ENCODE measurements at regions of chr6 and their contacts with region 1.

Region 1: DNA sequence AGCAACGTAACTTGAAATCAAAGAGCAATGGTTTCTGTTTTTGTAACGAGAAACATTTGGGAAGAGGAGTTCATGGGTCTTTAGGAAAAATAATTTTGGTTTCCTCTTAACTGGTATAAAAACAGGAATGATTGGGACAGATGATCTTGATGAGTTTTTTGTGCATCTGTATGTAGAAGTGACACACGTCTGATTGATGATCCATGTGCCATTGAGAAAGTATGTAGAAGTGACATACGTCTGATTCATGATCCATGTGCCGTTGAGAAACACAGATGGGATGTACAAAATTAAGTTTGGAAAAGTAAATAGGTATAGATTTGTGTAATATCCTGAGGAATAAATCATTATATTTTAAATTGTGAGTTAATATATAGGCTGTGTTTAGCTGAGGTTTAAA is 2.1 kb downstream of the KIAA1586 start:
- DNase-seq: no peak
- H3K4me3 Mint-ChIP-seq: peak overlapping the region; percentile 81
- H3K27ac Mint-ChIP-seq: no peak overlapping the region
- H3K4me1 Mint-ChIP-seq: peaks cover 21% of the 10 kb centered on the region
- H3K27me3 Mint-ChIP-seq: peaks cover 22% of the 10 kb centered on the region

Region 2: DNA sequence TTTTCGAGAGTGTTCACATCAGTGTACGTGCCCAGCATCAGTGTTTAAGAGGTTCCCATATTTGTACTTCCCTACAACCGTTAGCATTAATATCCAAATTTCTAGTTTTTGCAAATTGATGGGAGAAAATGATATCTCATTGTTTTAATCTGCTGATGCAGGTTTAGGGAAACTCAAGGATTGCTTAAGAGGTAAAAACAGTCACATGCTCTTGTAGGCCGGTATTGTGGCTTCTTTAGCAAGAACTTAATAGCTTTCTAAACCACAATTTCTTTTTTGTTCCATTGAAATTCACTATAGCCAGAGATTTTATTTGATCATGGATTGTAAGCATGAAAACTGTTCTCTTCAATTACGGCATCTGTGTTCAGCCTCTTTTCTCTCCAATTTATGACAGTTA is 64.2 kb before region 1 on chr6:
- intact Hi-C with region 1: no loop called
- DNase-seq: no peak
- H3K4me3 Mint-ChIP-seq: no peak overlapping the region
- H3K27ac Mint-ChIP-seq: no peak overlapping the region
- H3K4me1 Mint-ChIP-seq: no peaks in the 10 kb centered on the region
- H3K27me3 Mint-ChIP-seq: peaks cover 15% of the 10 kb centered on the region

Region 3: DNA sequence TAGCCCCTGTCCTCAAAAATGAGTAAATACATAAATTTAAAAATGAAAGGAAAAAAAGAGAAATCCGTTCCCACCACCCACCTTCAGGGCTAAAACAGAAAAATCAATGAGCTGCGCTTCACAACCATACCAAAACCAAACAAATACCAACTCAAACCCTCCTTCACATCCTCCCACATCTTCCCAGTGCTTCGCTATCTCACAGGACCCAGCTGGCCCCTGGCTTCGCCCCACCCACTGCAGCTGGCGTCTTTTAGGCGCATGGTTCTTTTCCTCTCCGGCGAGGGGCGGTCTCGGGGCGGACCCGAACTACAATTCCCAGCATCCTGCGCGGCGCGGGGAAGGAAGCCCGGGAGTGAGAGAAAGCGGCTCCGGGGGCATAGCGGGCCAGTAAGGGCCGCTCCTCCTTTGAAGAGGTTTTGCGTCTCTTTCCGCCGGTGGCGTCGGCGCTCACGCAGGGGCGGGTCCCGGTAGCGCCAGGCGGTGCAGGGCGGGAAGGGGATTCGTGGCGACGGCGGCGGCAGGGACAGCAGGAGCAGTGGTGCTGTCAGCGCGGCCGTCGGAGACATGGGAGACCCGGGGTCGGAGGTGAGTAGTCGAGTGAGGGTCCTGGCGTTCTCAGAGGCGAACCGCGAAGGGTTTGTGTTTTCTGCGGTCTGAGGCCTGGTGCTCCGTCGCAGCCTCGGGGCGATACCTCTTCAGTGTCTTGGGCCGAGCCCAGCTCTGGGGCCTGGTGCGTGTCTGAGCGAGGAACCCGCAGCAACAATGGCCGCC is 41.3 kb after region 1 on chr6 and contains the start of gene ZNF451:
- intact Hi-C with region 1: loop called (anchors 1 kb)
- DNase-seq: peak; percentile 99
- H3K4me3 Mint-ChIP-seq: peak within 1 kb of the TSS; percentile 70
- H3K27ac Mint-ChIP-seq: peak within 1 kb of the TSS; percentile 70
- H3K4me1 Mint-ChIP-seq: peaks cover 27% of the 10 kb centered on the region
- H3K27me3 Mint-ChIP-seq: no peaks in the 10 kb centered on the region
- total RNA-seq, gene ZNF451: 58.1 and 61.2 TPM in 2 replicates